ENCODE measurements at regions of chr19 and their contacts with region 1.

Region 1: GRCh38 chr19:55279770-55280643 is at the start of gene HSPBP1:
- DNase-seq: peak; percentile 98
- H3K4me3 ChIP-seq: peak within 1 kb of the TSS; percentile 47 to 80 (median 68)
- H3K27ac ChIP-seq: peak within 1 kb of the TSS; percentile 78 to 86 (median 81)
- H3K4me1 ChIP-seq: peaks cover 0 to 35% (median 30%) of the 10 kb centered on the region in 4 donors
- H3K27me3 ChIP-seq: no peaks in the 10 kb centered on the region
- CTCF ChIP-seq: no peak
- EP300 ChIP-seq: no peak
- POLR2A ChIP-seq: no peak
- total RNA-seq, gene HSPBP1: 19.7 to 30.5 (median 23.8) TPM

Region 2: DNA sequence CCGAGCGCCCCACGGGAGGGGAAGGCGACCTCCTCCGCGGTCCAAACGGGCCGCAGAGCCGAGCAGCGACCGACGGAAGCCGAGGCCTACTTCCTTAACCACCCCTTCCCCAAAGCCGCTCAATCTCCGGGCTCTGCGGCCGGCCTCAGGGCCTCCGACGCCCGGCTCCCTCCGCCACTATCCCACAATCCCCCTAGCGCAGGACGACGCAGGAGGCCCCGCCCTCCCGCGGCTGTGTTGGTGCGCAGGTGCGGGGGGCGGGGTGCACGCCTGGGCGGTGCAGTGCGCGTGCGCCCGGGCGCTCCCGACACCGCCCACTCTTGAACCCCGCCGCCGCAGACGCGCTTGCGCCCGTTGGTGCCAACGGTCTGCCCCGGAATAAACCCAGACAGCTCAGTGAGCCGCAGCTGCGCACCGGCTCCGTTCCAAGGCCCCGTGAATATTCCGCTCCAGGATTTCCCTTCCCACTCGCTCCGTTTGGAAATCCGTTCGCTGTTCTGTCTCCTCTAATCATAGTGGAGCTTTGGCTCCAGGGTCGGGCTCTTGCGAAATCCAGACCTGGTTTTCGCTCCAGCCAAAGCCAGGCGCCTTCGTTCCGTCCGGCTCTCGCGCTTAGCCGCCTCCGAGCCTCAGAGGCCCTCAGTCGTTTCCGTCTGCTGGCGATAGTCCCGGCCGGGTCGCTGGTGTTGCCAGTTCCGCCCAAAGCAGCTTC is 21.0 kb before region 1 on chr19 and contains the start of gene PPP6R1:
- intact Hi-C with region 1: loop called (anchors 1 kb)
- DNase-seq: peak; percentile 99
- H3K4me3 ChIP-seq: peak within 1 kb of the TSS; percentile 88 to 99 (median 96)
- H3K27ac ChIP-seq: peak within 1 kb of the TSS; percentile 85 to 91 (median 89)
- H3K4me1 ChIP-seq: peaks cover 4 to 51% (median 46%) of the 10 kb centered on the region in 4 donors
- H3K27me3 ChIP-seq: no peaks in the 10 kb centered on the region
- CTCF ChIP-seq: no peak
- EP300 ChIP-seq: peak in 1 of 4 donors; percentile 20
- POLR2A ChIP-seq: peak; percentile 84 to 87
- total RNA-seq, gene PPP6R1: 17.1 to 46.8 (median 24.9) TPM

Region 3: DNA sequence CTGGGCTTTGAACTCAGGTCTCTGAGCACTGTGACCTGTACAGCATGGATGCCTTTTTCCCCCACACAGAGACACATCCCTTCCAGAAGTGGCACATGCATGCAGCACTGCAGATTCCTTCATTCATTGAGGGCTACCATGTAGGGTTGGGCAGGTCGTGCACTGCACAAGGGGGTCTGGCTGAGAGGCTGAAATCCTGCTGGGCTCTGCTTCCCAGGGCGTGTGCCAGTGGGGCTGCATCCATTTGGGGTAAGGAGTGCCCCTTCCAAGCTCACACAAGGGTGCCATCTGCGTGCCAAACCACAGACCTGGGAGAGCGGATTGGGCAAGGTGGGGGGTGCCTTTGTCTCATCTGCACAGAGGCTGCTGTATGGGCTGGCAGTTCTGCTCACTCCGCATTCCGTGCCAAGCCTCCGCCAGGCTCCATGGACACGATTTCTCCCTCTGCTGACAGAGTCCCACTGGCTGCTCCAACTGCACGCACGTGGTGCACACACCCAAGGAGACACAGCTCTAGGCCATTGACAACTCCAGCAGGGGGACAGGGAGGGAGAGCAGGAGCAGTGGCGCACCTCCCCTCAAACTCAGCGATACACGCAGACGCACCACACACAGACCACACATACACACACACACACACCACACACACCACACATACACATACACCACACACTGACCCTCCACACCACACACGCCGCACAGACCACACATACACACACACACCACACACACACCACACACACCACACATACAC is 167.6 kb after region 1 on chr19:
- intact Hi-C with region 1: no loop called
- DNase-seq: no peak
- H3K4me3 ChIP-seq: no peak overlapping the region
- H3K27ac ChIP-seq: no peak overlapping the region
- H3K4me1 ChIP-seq: peaks cover 0 to 22% (median 21%) of the 10 kb centered on the region in 4 donors
- H3K27me3 ChIP-seq: peaks cover 49 to 71% (median 54%) of the 10 kb centered on the region in 3 donors
- CTCF ChIP-seq: no peak
- EP300 ChIP-seq: no peak
- POLR2A ChIP-seq: no peak

Region 4: DNA sequence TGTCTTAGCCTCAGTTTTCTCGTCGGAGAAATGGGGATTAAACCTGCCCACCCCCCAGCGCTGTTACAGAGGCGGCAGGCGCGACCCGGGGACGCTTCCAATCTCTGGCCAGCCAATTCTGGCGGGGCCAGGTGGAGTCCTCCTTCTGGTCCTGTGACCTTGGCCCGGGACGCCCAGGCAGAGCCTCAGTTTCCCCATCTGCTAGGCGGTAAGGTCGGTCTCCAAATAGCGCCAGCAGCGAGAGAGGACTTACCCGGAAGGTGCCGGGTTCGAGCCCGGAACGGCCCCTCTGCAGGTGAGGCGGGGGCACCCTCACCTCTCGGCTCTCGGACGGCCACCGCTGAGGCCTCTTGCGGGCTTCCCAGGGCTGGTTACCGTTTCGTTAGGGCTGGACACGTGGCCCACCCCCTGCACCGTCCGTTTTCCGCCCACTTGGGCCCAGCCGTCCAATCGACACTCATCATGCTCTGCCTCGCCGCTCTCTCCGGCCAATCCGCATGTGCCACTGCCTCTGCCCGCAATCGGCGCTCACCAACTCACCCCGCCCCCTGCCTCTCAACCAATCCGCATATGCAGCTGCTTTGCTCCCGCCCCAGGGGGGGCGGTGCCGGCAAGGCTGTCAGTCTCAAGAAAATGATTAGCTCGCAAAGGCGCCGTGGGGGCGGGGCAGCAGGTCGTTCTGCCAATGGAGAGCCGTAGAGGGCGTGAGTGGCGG is 181.4 kb after region 1 on chr19 and contains the start of gene ISOC2:
- intact Hi-C with region 1: loop called (anchors 1 kb)
- DNase-seq: peak; percentile 100
- H3K4me3 ChIP-seq: peak within 1 kb of the TSS; percentile 61 to 93 (median 86)
- H3K27ac ChIP-seq: peak within 1 kb of the TSS; percentile 93 to 98 (median 96)
- H3K4me1 ChIP-seq: peaks cover 0 to 34% (median 24%) of the 10 kb centered on the region in 4 donors
- H3K27me3 ChIP-seq: no peaks in the 10 kb centered on the region
- CTCF ChIP-seq: no peak
- EP300 ChIP-seq: no peak
- POLR2A ChIP-seq: peak; percentile 77 to 78
- total RNA-seq, gene ISOC2: 90.3 to 114 (median 101) TPM

Region 5: DNA sequence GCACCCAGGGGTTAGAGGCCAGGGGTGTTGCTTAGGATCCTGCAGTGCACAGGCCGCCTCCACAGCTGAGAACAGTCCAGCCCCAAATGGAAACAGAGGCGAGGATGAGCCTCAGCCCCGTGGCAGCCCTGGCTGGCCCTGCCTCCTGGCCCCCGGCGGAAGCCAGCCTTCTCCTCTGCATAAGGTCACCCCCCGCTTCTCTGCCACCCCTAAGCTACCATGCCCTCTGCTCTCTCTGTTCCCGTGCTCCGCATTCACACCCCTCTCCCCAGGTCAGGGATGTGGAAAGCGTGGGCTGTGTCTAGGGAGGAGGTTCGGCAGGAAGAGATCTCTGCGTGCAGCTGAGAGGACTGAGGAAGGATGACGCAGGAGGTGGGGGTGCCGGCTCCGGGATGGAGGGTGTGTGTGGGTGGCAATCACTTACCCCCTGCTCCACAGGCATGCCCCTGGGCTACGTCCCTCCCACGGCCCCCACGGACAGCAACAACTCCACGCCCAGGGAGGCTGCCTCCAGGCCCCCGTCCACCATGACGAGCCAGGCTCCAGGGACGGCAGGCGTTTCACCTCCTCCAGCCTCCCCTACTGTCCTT is 214.3 kb after region 1 on chr19:
- intact Hi-C with region 1: loop called (anchors 10 kb)
- DNase-seq: peak; percentile 81
- H3K4me3 ChIP-seq: peak overlapping the region in 3 of 4 donors; percentile 25 to 50 (median 27)
- H3K27ac ChIP-seq: peak overlapping the region; percentile 69 to 99 (median 94)
- H3K4me1 ChIP-seq: peaks cover 0 to 62% (median 56%) of the 10 kb centered on the region in 4 donors
- H3K27me3 ChIP-seq: no peaks in the 10 kb centered on the region
- CTCF ChIP-seq: no peak
- EP300 ChIP-seq: no peak
- POLR2A ChIP-seq: peak in 1 of 2 donors; percentile 20

Measured in sigmoid colon (tissue), 7 donors.